ENCODE measurements at regions of chr3 and their contacts with region 1.

Region 1: GRCh38 chr3:18988614-18989229 is 159.6 kb upstream of the KCNH8 start:
- DNase-seq: no peak
- ATAC-seq: peak; percentile 59
- H3K4me3 Mint-ChIP-seq: peak overlapping the region; percentile 73
- H3K27ac Mint-ChIP-seq: peak overlapping the region; percentile 96
- H3K4me1 Mint-ChIP-seq: peaks cover 35% of the 10 kb centered on the region
- H3K27me3 Mint-ChIP-seq: peaks cover 9% of the 10 kb centered on the region

Region 2: GRCh38 chr3:17894434-17895060 is 1094.2 kb before region 1 on chr3:
- CTCF ChIA-PET with region 1: no interaction called
- POLR2A ChIA-PET with region 1: no interaction called
- intact Hi-C with region 1: loop called in 1 of 2 experiments (anchors 10 kb)
- DNase-seq: peak; percentile 71
- ATAC-seq: peak; percentile 81
- H3K4me3 Mint-ChIP-seq: no peak overlapping the region
- H3K27ac Mint-ChIP-seq: no peak overlapping the region
- H3K4me1 Mint-ChIP-seq: no peaks in the 10 kb centered on the region
- H3K27me3 Mint-ChIP-seq: no peaks in the 10 kb centered on the region

Region 3: DNA sequence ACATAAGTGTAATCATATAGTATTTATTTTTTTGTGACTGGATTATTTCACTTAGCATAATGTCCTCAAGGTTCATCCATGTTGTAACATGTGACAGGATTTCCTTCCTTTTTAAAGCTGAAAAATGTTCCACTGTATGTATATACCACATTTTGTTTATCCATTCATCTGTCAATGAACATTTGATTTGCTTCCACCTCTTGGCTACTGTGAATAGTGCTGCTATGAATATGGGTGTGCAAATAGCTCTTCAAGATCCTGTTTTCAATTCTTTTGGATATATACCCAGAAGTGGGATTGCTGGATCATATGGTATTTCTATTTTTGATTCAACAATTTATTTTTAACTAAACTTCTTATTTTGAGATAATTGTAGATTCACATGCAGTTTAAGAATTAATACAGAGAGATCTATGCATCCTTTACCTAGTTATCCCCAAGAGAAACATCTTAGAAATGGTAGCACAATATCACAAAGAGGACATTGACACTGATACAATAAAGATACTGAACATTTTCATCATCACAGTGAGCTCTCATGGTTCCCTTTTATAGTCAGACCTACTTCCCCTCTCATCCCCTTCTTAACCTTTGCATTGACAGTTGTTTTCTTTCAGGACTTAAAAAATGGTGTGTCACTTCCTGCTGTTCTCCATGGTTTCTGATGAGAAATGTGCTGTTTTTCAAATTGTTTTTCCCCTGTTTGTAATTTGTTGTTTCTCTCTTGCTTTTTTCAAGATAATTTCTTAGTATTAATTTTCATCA is 653.7 kb before region 1 on chr3:
- CTCF ChIA-PET with region 1: no interaction called
- POLR2A ChIA-PET with region 1: no interaction called
- intact Hi-C with region 1: no loop called
- DNase-seq: no peak
- ATAC-seq: peak; percentile 83
- H3K4me3 Mint-ChIP-seq: no peak overlapping the region
- H3K27ac Mint-ChIP-seq: peak overlapping the region; percentile 56
- H3K4me1 Mint-ChIP-seq: peaks cover 14% of the 10 kb centered on the region
- H3K27me3 Mint-ChIP-seq: peaks cover 4% of the 10 kb centered on the region

Region 4: DNA sequence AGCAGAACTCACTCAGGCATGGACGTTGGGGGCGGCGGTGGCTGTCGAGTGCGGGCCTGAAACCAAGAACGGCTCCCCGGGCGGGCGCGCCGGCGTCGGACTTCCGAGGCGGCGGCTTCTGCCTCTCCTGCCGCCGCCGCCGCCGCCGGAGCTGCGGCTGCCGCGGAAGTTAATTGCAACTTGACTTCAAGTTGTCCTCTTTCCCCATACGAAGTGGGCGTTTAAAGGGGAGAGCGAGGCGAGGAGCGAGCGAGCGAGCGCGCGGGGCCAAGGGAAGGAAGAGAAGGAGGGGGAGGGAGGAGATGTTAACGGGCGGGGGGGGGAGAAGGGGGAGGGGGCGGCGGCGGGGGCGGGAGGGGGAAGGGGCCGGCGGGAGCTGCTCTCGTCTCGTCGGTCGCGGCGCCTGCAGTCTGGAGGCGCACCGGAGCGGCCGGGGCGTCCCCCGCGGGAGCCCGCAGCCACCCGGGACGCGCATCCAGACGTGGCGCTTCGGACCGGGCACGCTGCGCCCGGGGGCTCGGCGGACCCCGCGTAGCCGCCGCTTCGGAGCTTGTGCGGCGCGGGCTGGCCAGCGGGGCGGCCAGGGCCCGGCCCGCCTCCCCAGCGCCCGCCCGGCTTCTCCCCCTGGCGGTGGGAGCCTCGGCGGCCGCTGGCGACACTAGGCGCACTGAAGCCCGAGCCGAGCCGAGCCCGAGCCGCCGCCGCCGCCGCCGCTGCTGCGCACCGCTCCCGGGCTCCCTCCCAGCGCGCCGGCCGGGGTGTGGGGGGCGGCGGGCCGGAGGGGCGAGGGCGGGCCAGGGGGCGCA is 543.9 kb before region 1 on chr3:
- CTCF ChIA-PET with region 1: interaction called, 7 read pairs
- POLR2A ChIA-PET with region 1: interaction called, 3 read pairs
- intact Hi-C with region 1: loop called (anchors 2 to 5 kb)
- DNase-seq: peak; percentile 89
- ATAC-seq: peak; percentile 66
- H3K4me3 Mint-ChIP-seq: peak overlapping the region; percentile 96
- H3K27ac Mint-ChIP-seq: peak overlapping the region; percentile 91
- H3K4me1 Mint-ChIP-seq: peaks cover 25% of the 10 kb centered on the region
- H3K27me3 Mint-ChIP-seq: no peaks in the 10 kb centered on the region

Region 5: GRCh38 chr3:18679238-18679637 is 309.5 kb before region 1 on chr3:
- CTCF ChIA-PET with region 1: interaction called, 3 read pairs
- POLR2A ChIA-PET with region 1: no interaction called
- intact Hi-C with region 1: loop called (anchors 2 to 10 kb)
- DNase-seq: peak; percentile 69
- ATAC-seq: peak; percentile 87
- H3K4me3 Mint-ChIP-seq: peak overlapping the region; percentile 28
- H3K27ac Mint-ChIP-seq: peak overlapping the region; percentile 94
- H3K4me1 Mint-ChIP-seq: peaks cover 84% of the 10 kb centered on the region
- H3K27me3 Mint-ChIP-seq: no peaks in the 10 kb centered on the region

Region 6: DNA sequence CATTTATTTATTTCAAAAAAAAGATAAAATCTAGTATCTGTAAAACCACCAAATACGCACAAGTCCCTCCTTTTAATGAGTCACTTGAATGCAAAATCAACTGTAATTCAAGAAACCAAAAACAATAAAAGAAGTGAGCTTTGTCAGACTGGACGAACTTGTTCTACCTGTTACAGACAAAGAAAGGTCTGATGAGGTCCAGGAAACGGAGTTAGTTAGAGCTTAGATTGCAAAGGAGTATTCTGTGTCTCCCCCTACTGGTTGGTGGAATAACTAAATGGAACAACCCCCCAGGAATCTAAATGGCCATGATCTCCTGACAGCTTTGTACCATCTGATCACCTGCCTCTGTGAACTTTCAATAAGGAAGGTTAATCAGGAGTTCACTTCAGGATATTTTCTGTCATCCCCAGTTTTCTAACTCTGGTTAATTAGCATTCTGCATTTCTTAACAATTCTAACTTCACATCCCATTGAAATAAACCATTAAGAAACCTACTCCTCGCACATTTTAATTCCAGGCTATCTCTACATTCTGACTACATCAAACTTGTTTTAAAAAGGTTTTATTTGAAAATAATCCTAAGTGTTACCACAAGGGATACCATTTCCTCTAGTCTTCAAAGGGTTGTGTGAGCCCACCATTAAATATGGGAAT is 230.5 kb before region 1 on chr3:
- CTCF ChIA-PET with region 1: interaction called, 6 read pairs
- POLR2A ChIA-PET with region 1: no interaction called
- intact Hi-C with region 1: loop called (anchors 2 to 5 kb)
- DNase-seq: no peak
- ATAC-seq: peak; percentile 95
- H3K4me3 Mint-ChIP-seq: no peak overlapping the region
- H3K27ac Mint-ChIP-seq: peak overlapping the region; percentile 90
- H3K4me1 Mint-ChIP-seq: peaks cover 48% of the 10 kb centered on the region
- H3K27me3 Mint-ChIP-seq: no peaks in the 10 kb centered on the region

Region 7: DNA sequence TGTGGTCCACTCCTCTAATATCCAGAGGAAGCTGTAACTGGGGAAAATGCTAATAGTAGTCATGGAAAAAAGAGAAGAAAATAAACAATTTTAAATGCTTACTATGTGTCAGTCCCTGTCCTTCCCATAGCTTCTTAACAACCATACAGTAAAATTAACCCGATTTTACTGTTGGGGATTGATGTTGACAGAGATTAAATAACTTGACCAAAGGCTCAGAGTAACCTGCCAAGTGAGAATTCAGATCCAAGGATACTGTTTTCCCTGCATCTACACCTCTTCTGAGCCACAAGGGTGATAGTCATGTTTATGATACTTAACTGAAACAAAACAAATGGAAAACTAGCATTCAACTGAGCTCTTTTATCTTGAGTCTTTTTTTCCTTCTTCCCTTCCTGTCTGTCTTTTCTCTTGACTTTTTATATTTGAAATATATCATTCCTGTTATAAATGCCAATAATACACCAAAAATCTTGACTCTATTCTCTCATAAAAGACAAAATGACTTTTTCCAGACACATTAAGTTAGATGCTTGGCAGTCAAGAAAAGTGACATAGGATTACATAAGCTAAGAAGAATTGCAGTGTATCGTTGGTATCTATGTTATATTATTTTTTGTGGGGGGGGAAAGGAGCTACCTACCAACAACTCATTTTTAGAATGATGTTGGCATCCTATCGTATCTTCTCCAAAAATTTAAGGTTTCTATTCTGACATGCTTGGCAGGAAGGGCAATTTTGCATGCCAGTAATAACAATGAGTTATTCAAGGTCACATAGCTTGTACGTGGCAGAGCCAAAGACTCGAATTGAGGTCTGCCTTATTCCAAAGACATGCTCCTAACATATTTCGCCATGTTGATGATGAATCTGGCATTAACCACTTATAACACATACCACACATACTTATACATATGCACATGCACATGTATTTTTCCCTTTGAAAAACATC is 147.1 kb before region 1 on chr3:
- CTCF ChIA-PET with region 1: interaction called, 37 read pairs
- POLR2A ChIA-PET with region 1: no interaction called
- intact Hi-C with region 1: loop called in 1 of 2 experiments (anchors 2 kb)
- DNase-seq: no peak
- ATAC-seq: no peak
- H3K4me3 Mint-ChIP-seq: no peak overlapping the region
- H3K27ac Mint-ChIP-seq: no peak overlapping the region
- H3K4me1 Mint-ChIP-seq: peaks cover 45% of the 10 kb centered on the region
- H3K27me3 Mint-ChIP-seq: no peaks in the 10 kb centered on the region

Region 8: DNA sequence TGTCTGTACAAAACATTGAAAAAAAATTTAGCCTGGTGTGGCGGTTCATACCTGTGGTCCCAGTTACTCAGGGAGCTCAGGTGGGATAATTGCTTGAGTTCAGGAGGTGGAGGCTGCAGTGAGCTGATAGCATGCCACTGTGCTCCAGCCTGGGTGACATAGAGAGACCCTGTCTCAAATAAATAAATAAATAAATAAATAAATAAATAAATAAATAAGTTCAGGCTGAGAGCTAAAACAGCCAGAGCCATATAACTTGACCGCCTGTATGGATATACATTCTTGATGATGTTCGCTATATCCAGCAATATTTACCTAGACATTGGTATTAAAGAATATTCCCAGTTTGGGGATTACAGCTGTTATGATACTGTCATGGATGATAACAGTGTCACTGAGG is 306.5 kb after region 1 on chr3:
- CTCF ChIA-PET with region 1: no interaction called
- POLR2A ChIA-PET with region 1: no interaction called
- intact Hi-C with region 1: no loop called
- DNase-seq: no peak
- ATAC-seq: no peak
- H3K4me3 Mint-ChIP-seq: no peak overlapping the region
- H3K27ac Mint-ChIP-seq: no peak overlapping the region
- H3K4me1 Mint-ChIP-seq: no peaks in the 10 kb centered on the region
- H3K27me3 Mint-ChIP-seq: no peaks in the 10 kb centered on the region